ENCODE measurements at regions of chr1 and their contacts with region 1.

Region 1: DNA sequence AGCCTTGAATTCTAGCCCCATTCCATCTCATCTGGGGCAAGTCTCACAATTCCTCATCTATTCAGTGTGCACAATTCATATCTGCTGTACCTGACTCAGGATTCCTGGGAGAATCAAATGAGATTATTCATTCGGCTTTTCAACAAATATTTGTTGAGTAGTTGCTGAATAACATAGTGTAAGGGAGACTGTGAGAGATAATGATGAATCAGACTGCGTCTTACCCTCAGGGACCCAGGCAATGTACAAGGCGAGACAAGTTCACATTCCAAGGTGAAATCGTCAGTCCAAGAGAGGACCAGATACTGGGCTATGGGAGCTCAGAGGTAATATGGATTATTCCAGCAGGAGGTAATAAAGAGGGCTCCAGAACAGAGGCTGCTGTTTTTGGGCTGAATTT is 67.8 kb upstream of the SMYD2 start:
- DNase-seq: no peak
- H3K4me3 ChIP-seq: no peak overlapping the region
- H3K27me3 ChIP-seq: peaks cover 6% of the 10 kb centered on the region
- CTCF ChIP-seq: no peak

Region 2: DNA sequence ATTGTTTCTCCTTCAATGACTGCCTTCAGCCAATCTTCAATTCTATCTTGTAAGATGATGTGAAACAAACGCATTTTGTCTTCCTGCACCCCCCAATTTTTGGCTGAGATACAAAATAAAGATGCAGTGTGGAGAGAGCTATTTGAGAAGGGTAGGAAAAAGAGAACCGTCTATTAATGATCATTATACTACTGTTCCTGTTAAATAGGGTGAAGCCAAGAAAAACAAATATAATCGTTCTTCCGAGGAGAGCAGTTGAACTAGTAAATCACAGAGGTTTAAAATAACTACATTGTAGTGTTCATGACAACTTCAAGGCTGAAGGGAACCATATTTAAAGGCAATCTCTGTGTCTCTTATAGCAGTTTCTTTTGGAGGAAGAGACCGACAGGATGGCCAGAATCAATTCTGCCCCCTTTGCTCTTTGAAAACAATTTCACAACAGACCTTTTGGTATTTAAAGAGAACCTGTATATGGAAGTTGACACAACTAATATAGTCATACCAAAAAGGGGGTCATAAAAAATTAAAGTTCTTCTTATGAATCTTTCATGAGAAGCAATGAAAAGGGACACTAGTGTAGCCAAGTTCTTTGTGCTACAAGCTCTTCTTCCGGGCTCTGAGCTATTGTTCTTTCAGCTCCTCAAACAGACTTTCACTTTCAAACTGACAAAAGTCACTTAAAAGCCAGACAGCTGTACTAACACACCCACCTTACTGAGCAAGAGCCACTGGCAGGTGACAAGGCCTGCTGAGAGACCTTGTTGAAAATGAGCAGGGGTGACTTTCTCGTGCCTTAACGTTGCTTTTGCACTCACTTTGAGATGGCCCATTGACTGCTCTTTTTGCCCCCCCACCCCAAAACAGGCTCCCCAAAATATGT is 194.5 kb before region 1 on chr1:
- CTCF ChIA-PET with region 1: no interaction called
- POLR2A ChIA-PET with region 1: no interaction called
- DNase-seq: no peak
- H3K4me3 ChIP-seq: no peak overlapping the region
- H3K27me3 ChIP-seq: no peaks in the 10 kb centered on the region
- CTCF ChIP-seq: no peak

Region 3: GRCh38 chr1:214224611-214225354 is 11.6 kb after region 1 on chr1:
- CTCF ChIA-PET with region 1: interaction called, 17 read pairs
- POLR2A ChIA-PET with region 1: no interaction called
- DNase-seq: no peak
- H3K4me3 ChIP-seq: peak overlapping the region; percentile 33
- H3K27me3 ChIP-seq: peaks cover 6% of the 10 kb centered on the region
- CTCF ChIP-seq: no peak

Region 4: GRCh38 chr1:214234635-214235025 is 21.5 kb after region 1 on chr1:
- CTCF ChIA-PET with region 1: interaction called, 15 read pairs
- POLR2A ChIA-PET with region 1: no interaction called
- DNase-seq: no peak
- H3K4me3 ChIP-seq: no peak overlapping the region
- H3K27me3 ChIP-seq: no peaks in the 10 kb centered on the region
- CTCF ChIP-seq: no peak

Region 5: GRCh38 chr1:214584805-214585766 is 371.9 kb after region 1 on chr1:
- CTCF ChIA-PET with region 1: interaction called, 28 read pairs
- POLR2A ChIA-PET with region 1: no interaction called
- DNase-seq: no peak
- H3K4me3 ChIP-seq: no peak overlapping the region
- H3K27me3 ChIP-seq: no peaks in the 10 kb centered on the region
- CTCF ChIP-seq: peak; percentile 75

Region 6: DNA sequence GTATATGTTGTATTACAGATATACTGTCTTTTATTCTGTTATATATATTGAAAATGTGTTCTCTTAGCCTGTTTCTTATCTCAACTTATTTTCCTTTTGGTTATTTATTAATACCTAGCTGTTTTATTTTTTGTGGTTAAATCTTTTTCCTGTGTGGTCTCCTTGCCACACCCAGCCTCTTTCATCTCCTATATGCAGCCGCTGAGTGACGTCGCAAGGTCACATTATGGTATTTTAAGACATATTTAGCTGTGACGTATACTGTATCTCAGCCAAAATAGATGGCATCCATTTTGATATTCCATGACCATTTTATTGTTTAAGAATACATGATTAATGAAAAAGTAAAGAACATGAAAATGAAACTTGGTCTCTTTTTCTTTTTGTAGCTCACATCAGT is 419.0 kb after region 1 on chr1:
- CTCF ChIA-PET with region 1: interaction called, 14 read pairs
- POLR2A ChIA-PET with region 1: no interaction called
- DNase-seq: no peak
- H3K4me3 ChIP-seq: no peak overlapping the region
- H3K27me3 ChIP-seq: no peaks in the 10 kb centered on the region
- CTCF ChIP-seq: no peak